Breast epithelium (tissue), 4 donors: ENCODE measurements at regions of chr11 and their contacts with region 1.

Region 1: DNA sequence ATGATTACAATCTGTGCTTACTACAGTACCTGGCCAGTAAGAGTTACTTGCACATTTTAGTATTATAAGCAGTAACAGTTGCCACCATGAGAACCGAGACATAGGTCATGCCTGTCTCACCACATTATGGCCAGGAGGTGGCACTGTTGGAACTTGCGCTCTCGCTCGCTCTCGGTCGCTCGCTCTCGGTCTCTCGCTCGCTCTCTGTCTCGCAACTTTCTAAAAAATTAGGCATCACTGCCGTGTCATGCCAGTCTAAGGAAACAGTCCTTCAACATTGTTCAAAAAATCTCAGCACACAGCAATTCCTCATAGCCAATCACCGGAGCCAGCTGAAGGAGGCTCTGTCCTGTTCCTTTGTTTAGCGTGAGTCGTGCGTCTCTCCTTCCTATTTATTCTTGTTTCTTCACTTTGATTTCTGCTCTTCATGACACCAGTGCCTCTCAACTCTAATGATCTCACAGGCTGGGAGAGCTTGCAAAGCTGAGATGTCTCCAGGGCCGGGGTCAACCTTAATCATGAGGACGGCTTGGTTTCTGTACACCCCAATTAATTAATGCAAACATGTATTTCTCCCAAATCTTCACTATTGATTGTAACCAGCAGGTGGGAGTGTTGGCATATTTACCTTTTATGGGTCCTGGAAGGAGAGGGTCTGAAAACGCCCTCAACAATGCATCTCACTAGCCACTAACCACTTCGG is 6.3 kb upstream of the ADAMTS8 start:
- DNase-seq: peak; percentile 58 to 74
- H3K4me3 ChIP-seq: peak overlapping the region; percentile 51 to 71 (median 58)
- H3K27ac ChIP-seq: peak overlapping the region; percentile 74 to 76
- H3K4me1 ChIP-seq: no peaks in the 10 kb centered on the region
- H3K27me3 ChIP-seq: peaks cover 0 to 5% of the 10 kb centered on the region in 2 donors
- CTCF ChIP-seq: peak; percentile 78 to 85 (median 82)
- POLR2A ChIP-seq: no peak

Region 2: DNA sequence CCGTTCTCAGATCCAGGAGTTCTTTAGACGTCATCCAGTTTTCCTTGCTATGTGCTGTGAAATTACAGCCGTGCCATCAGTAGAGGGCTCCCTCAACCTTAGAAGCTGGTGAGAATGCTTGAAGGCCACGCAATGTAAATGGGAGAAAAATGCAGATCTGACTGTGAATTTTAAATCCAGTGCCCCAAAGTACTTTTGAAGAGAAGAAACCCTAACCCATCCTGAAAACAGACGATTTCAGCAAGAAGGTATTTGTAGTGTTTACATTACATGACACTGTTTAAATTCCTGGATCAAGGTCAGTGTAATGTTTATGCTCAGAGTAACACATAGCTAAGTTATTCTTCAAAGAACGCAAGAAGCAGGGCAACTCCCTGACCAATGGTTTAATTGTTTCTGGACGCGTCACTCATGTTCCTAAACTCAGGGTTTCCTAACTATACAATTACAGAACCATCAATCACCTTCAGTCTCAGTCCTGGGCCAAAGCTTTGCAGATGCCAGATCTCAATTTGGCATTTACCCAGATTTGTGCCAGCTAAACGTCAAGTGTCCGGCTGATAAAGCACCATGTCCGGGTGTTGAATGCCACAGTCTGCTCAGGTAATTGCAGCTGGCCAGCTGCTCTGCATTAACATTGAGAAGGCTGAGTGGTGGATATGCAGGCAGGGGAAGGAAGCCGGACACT is 44.5 kb before region 1 on chr11:
- intact Hi-C with region 1: no loop called
- DNase-seq: no peak
- H3K4me3 ChIP-seq: no peak overlapping the region
- H3K27ac ChIP-seq: no peak overlapping the region
- H3K4me1 ChIP-seq: no peaks in the 10 kb centered on the region
- H3K27me3 ChIP-seq: no peaks in the 10 kb centered on the region
- CTCF ChIP-seq: no peak
- POLR2A ChIP-seq: no peak

Region 3: DNA sequence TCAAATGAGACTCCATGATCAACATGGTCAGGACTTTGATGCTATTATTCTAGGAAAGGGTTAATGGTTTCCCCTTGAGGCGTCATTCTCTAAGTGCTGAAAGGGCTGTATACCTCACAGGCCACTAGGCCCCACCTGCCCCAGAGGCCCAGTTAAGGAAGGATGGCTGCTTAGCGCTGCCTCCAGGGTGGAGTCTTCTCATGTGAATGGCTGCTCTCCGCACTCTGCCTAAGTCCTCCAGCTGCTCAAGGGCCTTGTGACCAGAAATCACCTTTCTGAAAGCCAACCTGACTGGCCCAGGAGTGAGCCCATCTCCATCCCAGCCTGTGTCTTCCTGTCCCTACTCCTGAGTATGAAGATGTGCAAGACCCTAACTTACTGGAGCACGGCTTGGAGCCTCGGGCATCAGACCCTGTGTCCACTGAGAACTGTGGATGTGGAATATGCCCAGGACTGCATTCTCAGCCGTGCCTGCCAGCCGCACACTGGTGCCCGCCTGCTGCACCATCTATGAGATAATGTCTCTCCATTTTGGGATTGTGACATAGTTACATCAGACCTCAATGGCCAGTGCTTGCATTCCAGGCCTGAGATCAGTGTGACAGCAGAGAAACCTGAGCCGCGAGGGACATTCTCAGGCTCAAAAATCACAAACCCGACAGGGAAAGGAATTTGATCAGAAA is 430.6 kb after region 1 on chr11:
- intact Hi-C with region 1: loop called (anchors 2 kb)
- DNase-seq: no peak
- H3K4me3 ChIP-seq: no peak overlapping the region
- H3K27ac ChIP-seq: no peak overlapping the region
- H3K4me1 ChIP-seq: no peaks in the 10 kb centered on the region
- H3K27me3 ChIP-seq: no peaks in the 10 kb centered on the region
- CTCF ChIP-seq: no peak
- POLR2A ChIP-seq: no peak